ENCODE measurements at regions of chr2 and their contacts with region 1.

Region 1: DNA sequence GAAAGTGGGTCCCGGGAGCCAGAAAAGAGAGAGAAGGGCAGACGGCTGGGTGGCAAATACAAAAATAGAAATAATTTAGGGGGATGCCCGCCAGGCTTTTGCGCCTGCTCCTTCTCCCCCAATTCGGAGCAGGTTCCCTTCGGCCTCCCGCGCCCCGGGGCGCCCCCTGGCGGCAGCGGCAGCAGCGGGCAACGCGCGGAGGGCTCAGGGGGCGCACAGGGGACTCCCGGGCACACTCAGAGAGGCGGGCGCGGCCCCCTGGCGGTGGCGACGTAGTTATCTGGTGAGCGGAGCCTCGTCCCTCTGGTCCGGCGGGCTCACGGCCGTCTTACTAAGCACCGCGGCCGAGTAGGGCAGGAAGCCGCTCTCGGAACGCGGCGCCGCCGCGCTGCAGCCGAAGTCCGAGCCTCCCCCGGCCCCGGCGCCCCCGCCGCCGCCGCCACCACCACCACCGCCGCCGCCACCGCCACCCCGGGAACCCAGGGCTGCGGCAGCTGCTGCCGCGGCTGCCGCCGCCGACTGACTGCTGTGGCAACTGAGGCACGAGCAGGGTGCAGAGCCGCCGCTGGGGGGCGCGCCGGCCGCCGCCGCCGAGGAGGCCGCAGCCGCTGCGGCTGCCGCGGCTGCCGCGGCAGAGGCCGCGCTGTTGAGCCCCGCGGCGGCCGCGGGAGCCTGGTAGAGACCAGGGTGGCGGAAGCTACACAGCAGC is 3.8 kb downstream of the EVX2 start:
- DNase-seq: no peak
- ATAC-seq: peak; percentile 28 to 63
- H3K4me3 ChIP-seq: peak overlapping the region; percentile 12 to 39 (median 29)
- H3K27ac ChIP-seq: no peak overlapping the region
- H3K4me1 ChIP-seq: peaks cover 17 to 21% of the 10 kb centered on the region in 2 donors
- H3K27me3 ChIP-seq: peaks cover 93 to 97% (median 94%) of the 10 kb centered on the region in 3 donors
- CTCF ChIP-seq: peak; percentile 55 to 91 (median 69)
- POLR2A ChIP-seq: no peak

Region 2: GRCh38 chr2:175684457-175684856 is 395.5 kb before region 1 on chr2:
- in situ Hi-C with region 1: loop called in 2 of 4 experiments (anchors 10 kb)
- intact Hi-C with region 1: no loop called
- DNase-seq: no peak
- ATAC-seq: no peak
- H3K4me3 ChIP-seq: no peak overlapping the region
- H3K27ac ChIP-seq: no peak overlapping the region
- H3K4me1 ChIP-seq: no peaks in the 10 kb centered on the region
- H3K27me3 ChIP-seq: peaks cover 0 to 17% (median 16%) of the 10 kb centered on the region in 3 donors
- CTCF ChIP-seq: no peak
- POLR2A ChIP-seq: no peak

Region 3: DNA sequence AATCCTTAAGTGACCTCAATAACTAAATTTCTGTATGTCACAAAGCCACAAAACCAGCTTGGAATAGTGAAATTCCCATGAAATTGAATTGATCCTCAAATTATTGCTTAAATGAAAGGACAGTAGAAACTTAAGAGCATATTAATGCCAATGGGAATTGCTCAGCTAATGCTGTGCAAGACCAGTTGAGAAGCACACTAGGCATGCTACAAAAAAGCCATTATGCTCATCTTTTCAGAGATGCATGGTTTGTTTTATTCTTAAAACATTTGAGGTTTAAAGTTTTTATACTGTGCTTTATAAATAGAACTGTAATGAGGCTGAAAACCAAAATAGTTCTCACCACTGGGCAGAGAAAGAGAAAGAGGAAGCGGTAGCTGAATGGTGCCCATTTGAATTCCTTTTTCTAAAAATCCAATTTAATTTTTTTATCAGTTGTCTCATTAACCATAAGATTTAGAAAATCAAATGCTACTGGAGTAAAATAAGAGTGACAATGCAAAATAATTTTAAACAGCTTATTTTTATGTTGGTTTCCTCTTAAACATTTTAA is 176.5 kb before region 1 on chr2:
- in situ Hi-C with region 1: no loop called
- intact Hi-C with region 1: no loop called
- DNase-seq: no peak
- ATAC-seq: peak in 1 of 2 donors; percentile 33
- H3K4me3 ChIP-seq: no peak overlapping the region
- H3K27ac ChIP-seq: no peak overlapping the region
- H3K4me1 ChIP-seq: peaks cover 9 to 24% of the 10 kb centered on the region in 2 donors
- H3K27me3 ChIP-seq: no peaks in the 10 kb centered on the region
- CTCF ChIP-seq: no peak
- POLR2A ChIP-seq: no peak

Region 4: DNA sequence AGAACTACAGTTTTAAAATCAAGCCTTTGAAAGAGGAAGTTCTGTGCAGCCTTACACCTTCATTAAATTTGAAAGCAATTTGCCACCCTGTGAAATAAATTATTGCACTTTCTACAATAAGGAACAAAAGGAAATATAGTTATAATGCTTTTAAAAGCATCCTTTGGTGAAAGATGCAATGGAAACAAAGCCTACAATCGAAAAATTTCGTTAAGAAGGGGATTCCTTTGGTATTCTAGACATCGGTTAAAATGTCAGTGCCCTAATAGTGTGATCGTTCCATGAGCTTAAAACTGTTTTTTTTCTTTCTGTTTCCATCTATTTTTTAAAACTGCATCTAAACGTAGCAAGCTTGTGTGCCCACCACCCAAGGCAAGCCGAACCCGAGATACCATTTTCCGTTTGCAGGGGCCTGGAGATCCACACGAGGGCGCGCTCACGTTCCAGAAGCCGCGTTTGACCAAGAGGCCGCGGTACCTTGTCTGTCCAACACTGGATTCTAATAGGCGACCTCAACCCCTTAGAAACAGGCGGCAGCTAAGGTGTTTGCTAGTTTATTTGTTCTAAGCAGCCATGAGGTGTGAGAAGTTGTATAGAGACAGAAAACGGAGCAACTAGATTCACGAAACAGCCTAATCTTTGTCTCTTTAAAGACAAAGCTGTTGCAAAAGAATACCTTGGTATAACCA is 31.1 kb after region 1 on chr2:
- in situ Hi-C with region 1: no loop called
- intact Hi-C with region 1: loop called (anchors 5 kb)
- DNase-seq: no peak
- ATAC-seq: no peak
- H3K4me3 ChIP-seq: no peak overlapping the region
- H3K27ac ChIP-seq: no peak overlapping the region
- H3K4me1 ChIP-seq: peaks cover 6 to 13% of the 10 kb centered on the region in 2 donors
- H3K27me3 ChIP-seq: peaks cover 93 to 96% (median 96%) of the 10 kb centered on the region in 3 donors
- CTCF ChIP-seq: peak in 3 of 5 experiments; percentile 46 to 66 (median 58)
- POLR2A ChIP-seq: no peak

Region 5: GRCh38 chr2:176370467-176371171 is 290.6 kb after region 1 on chr2:
- in situ Hi-C with region 1: no loop called
- intact Hi-C with region 1: no loop called
- DNase-seq: no peak
- ATAC-seq: no peak
- H3K4me3 ChIP-seq: no peak overlapping the region
- H3K27ac ChIP-seq: no peak overlapping the region
- H3K4me1 ChIP-seq: no peaks in the 10 kb centered on the region
- H3K27me3 ChIP-seq: no peaks in the 10 kb centered on the region
- CTCF ChIP-seq: no peak
- POLR2A ChIP-seq: no peak

Measured in gastrocnemius medialis (tissue), 4 donors.